Uterus (tissue), 4 donors: ENCODE measurements at regions of chr22 and their contacts with region 1.

Region 1: DNA sequence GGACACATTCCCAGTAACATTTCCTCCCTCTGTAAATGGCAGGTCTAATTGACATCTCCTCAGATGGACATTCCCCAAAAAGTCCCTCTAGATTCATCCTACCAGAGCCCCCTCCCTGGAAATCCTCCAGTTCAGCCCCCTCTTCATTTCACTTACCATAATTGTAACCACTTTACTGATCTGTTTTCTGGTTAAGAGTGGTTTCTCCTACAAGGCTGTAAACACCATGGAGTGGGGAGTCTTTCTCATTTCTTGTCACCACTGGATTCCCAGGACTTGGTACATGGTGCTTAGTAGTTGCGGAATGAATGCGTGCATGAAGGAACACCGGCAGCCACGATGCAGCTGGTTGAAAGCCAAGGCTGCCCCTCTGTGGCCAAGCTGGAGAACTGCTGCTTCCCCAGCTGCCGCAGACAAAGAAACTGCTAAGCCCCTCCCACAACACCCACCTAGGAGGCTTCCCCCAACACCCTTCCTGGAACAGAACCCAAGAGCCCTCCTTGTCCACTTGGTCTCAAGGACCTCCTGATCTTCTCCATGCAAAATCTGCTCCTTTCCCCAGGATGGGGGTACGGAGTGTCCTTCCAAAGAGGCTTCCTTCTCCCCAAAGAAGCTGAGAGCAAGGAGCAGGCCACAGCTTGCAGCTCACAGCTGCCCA is 18.6 kb upstream of the SCARF2 start:
- DNase-seq: peak; percentile 75 to 79
- H3K4me3 ChIP-seq: no peak overlapping the region
- H3K27ac ChIP-seq: no peak overlapping the region
- H3K4me1 ChIP-seq: no peaks in the 10 kb centered on the region
- H3K27me3 ChIP-seq: no peaks in the 10 kb centered on the region
- CTCF ChIP-seq: peak; percentile 80 to 92 (median 89)
- POLR2A ChIP-seq: no peak

Region 2: DNA sequence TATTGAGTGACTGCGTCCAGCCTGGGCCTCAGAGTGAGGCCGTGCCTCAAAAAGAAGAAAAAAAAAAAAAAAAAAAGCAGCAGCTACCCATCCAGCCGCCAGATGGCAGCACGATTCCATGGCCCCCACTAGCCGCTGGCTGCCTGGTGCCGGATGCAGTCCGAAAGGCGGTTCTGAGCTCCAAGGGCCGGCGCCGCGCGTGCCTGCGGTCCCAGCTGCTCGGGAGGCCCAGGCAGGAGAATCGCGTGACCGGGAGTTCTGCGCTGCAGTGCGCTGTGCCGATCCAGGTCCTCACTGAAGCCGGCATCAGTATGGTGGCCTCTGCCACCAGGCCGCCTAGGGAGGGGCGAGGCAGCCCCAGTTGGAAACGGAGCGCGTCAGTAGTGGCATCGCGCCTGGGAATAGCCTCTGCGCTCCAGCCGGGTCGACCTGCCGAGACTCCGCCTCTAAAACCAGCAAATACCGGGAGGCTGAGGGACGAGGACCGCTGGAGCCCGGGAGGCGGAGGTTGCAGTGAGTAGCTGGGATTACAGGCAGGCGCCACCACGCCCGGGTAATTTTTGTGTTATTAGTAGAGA is 37.9 kb before region 1 on chr22:
- intact Hi-C with region 1: loop called (anchors 5 kb)
- DNase-seq: peak; percentile 85
- H3K4me3 ChIP-seq: peak overlapping the region; percentile 5 to 27
- H3K27ac ChIP-seq: peak overlapping the region; percentile 60 to 64
- H3K4me1 ChIP-seq: peaks cover 0 to 6% of the 10 kb centered on the region in 2 donors
- H3K27me3 ChIP-seq: no peaks in the 10 kb centered on the region
- CTCF ChIP-seq: peak; percentile 83 to 92 (median 86)
- POLR2A ChIP-seq: no peak